ENCODE measurements at regions of chr9 and their contacts with region 1.

Region 1: GRCh38 chr9:137188490-137189296 is at the starts of genes ANAPC2 and SSNA1:
- DNase-seq: peak; percentile 80 to 98
- H3K4me3 ChIP-seq: peak within 1 kb of the TSS; percentile 71 to 92 (median 82)
- H3K27ac ChIP-seq: peak within 1 kb of the TSS; percentile 57; the same call in 1 of the 2 replicates
- H3K4me1 ChIP-seq: peaks cover 0 to 17% (median 6%) of the 10 kb centered on the region in 4 experiments; a peak in 5 of 7 replicates
- H3K27me3 ChIP-seq: no peaks in the 10 kb centered on the region; a peak in 1 of 7 replicates
- CTCF ChIP-seq: peak in 2 of 3 experiments; percentile 37 to 57; a peak in 3 of 4 replicates
- EP300 ChIP-seq: peak in 1 of 2 experiments; percentile 25; a peak in 1 of 3 replicates
- POLR2A ChIP-seq: peak in 1 of 2 experiments; percentile 88; a peak in 2 of 3 replicates
- RAD21 ChIP-seq: peak; percentile 34 to 45; a peak in 3 of 4 replicates
- total RNA-seq, gene ANAPC2: 37.7 and 41.9 TPM in 2 replicates
- total RNA-seq, gene SSNA1: 87.3 and 91.3 TPM in 2 replicates

Region 2: GRCh38 chr9:137168905-137169856 is 19.5 kb before region 1 on chr9:
- CTCF ChIA-PET with region 1: interaction called, 16 read pairs
- POLR2A ChIA-PET with region 1: interaction called, 14 read pairs
- DNase-seq: peak in 1 of 2 experiments; percentile 89
- H3K4me3 ChIP-seq: peak overlapping the region; percentile 35 to 65 (median 49)
- H3K27ac ChIP-seq: no peak overlapping the region
- H3K4me1 ChIP-seq: peaks cover 0 to 16% (median 11%) of the 10 kb centered on the region in 4 experiments; a peak in 6 of 7 replicates
- H3K27me3 ChIP-seq: peaks cover 38 to 84% (median 68%) of the 10 kb centered on the region in 4 experiments
- CTCF ChIP-seq: no peak
- EP300 ChIP-seq: no peak
- POLR2A ChIP-seq: no peak
- RAD21 ChIP-seq: no peak; a peak in 1 of 4 replicates

Region 3: GRCh38 chr9:137217276-137218211 is 28.9 kb after region 1 on chr9:
- CTCF ChIA-PET with region 1: interaction called, 204 read pairs
- POLR2A ChIA-PET with region 1: interaction called, 20 read pairs
- DNase-seq: peak; percentile 56 to 87
- H3K4me3 ChIP-seq: no peak overlapping the region
- H3K27ac ChIP-seq: no peak overlapping the region
- H3K4me1 ChIP-seq: peaks cover 0 to 10% (median 4%) of the 10 kb centered on the region in 4 experiments; a peak in 5 of 7 replicates
- H3K27me3 ChIP-seq: no peaks in the 10 kb centered on the region; a peak in 2 of 7 replicates
- CTCF ChIP-seq: peak in 1 of 3 experiments; percentile 1; a peak in 1 of 4 replicates
- EP300 ChIP-seq: no peak
- POLR2A ChIP-seq: peak in 1 of 2 experiments; percentile 37; a peak in 1 of 3 replicates
- RAD21 ChIP-seq: no peak

Region 4: GRCh38 chr9:137223078-137223970 is 34.6 kb after region 1 on chr9:
- CTCF ChIA-PET with region 1: interaction called, 204 read pairs
- POLR2A ChIA-PET with region 1: interaction called, 19 read pairs
- DNase-seq: peak; percentile 96 to 99
- H3K4me3 ChIP-seq: peak overlapping the region; percentile 67 to 92 (median 79)
- H3K27ac ChIP-seq: no peak overlapping the region
- H3K4me1 ChIP-seq: peaks cover 0 to 20% (median 10%) of the 10 kb centered on the region in 4 experiments; a peak in 5 of 7 replicates
- H3K27me3 ChIP-seq: no peaks in the 10 kb centered on the region; a peak in 2 of 7 replicates
- CTCF ChIP-seq: no peak
- EP300 ChIP-seq: no peak
- POLR2A ChIP-seq: peak in 1 of 2 experiments; percentile 53; a peak in 1 of 3 replicates
- RAD21 ChIP-seq: no peak

Region 5: DNA sequence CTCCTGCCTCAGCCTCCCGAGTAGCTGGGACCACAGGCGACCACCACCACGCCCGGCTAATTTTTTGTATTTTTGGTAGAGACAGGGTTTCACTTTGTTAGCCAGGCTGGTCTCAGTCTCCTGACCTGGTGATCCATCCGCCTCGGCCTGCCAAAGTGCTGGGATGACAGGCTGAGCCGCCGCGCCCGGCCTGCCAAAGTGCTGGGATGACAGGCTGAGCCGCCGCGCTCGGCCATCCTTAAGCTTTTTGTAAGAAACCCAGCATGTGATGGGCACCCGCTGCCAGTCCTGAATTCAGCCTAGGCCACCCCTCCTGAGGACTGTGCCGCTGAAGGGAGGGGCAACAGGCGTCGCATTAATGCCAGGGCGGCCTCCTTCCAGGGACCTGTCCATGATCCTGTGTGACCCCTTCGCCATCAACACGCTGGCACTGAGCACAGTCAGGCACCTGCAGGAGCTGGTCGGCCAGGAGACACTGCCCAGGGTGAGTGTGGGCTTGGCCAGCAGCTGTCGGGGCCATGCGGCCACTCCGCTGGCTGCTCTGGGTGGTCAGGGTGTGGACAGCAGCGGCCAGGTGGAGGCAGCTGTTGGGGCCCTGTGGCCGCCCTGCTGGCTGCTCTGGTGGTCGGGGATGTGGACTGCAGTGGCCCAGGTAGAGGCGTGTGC is 76.9 kb after region 1 on chr9:
- CTCF ChIA-PET with region 1: no interaction called
- POLR2A ChIA-PET with region 1: no interaction called
- DNase-seq: no peak
- H3K4me3 ChIP-seq: no peak overlapping the region
- H3K27ac ChIP-seq: no peak overlapping the region
- H3K4me1 ChIP-seq: no peaks in the 10 kb centered on the region
- H3K27me3 ChIP-seq: no peaks in the 10 kb centered on the region
- CTCF ChIP-seq: no peak
- EP300 ChIP-seq: no peak
- POLR2A ChIP-seq: no peak
- RAD21 ChIP-seq: no peak

Region 6: GRCh38 chr9:137383081-137383889 is 194.6 kb after region 1 on chr9:
- CTCF ChIA-PET with region 1: no interaction called
- POLR2A ChIA-PET with region 1: no interaction called
- DNase-seq: peak in 1 of 2 experiments; percentile 50
- H3K4me3 ChIP-seq: no peak overlapping the region
- H3K27ac ChIP-seq: no peak overlapping the region
- H3K4me1 ChIP-seq: no peaks in the 10 kb centered on the region; a peak in 1 of 7 replicates
- H3K27me3 ChIP-seq: no peaks in the 10 kb centered on the region
- CTCF ChIP-seq: no peak
- EP300 ChIP-seq: no peak
- POLR2A ChIP-seq: no peak
- RAD21 ChIP-seq: no peak

Measured in H1 (cell line).